A673 (cell line): ENCODE measurements at regions of chr13 and their contacts with region 1.

Region 1: GRCh38 chr13:52652196-52652979 is at the start of gene SUGT1:
- DNase-seq: peak; percentile 99
- H3K4me3 ChIP-seq: peak within 1 kb of the TSS; percentile 84
- H3K27ac ChIP-seq: peak within 1 kb of the TSS; percentile 97
- H3K4me1 ChIP-seq: peaks cover 7% of the 10 kb centered on the region
- H3K27me3 ChIP-seq: no peaks in the 10 kb centered on the region
- CTCF ChIP-seq: peak; percentile 77
- total RNA-seq, gene SUGT1: 104 and 132 TPM in 2 replicates

Region 2: DNA sequence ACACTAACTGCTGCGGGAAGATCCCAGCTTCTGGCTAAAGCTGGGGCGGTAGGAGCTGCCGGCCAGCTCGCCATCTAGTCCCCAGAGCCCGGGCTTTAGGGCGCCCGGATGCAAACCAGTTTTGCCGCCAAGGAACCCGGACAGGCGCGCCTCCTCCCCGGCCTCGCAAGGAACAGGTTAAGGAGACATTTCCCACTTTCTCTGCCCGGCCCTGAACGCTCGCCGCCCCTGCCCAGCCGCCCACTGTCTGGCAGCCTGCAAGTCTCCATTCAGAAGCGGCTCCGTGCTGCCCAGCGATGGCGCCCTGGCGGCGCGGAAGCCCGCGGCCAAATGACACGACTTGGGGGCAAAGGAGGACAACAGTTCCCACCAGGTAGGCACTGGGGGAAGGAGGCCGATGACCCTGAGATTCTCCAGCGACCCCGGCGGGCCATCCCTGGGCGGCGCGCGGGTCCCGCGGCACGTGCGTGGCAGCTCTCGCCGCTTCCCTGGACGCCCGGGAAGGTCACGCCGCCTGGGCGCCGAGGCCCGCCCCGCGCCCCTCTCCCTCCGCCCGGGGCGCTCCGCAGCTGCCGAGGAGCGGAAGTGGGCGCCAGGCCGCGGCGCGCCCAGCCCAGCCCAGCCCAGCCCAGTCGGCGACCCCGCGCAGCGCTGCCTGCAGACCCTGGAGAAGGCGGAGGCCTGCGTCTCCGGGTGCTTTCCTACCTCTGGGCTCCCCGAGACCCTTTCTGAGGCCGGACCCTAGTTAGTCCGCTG is 52.4 kb before region 1 on chr13:
- CTCF ChIA-PET with region 1: no interaction called
- POLR2A ChIA-PET with region 1: no interaction called
- intact Hi-C with region 1: no loop called
- DNase-seq: peak; percentile 14
- H3K4me3 ChIP-seq: peak overlapping the region; percentile 43
- H3K27ac ChIP-seq: peak overlapping the region; percentile 13
- H3K4me1 ChIP-seq: no peaks in the 10 kb centered on the region
- H3K27me3 ChIP-seq: no peaks in the 10 kb centered on the region
- CTCF ChIP-seq: no peak

Region 3: GRCh38 chr13:52617070-52618060 is 35.0 kb before region 1 on chr13:
- CTCF ChIA-PET with region 1: no interaction called
- POLR2A ChIA-PET with region 1: no interaction called
- intact Hi-C with region 1: loop called (anchors 1 kb)
- DNase-seq: peak; percentile 94
- H3K4me3 ChIP-seq: peak overlapping the region; percentile 78
- H3K27ac ChIP-seq: peak overlapping the region; percentile 72
- H3K4me1 ChIP-seq: no peaks in the 10 kb centered on the region
- H3K27me3 ChIP-seq: no peaks in the 10 kb centered on the region
- CTCF ChIP-seq: no peak

Region 4: DNA sequence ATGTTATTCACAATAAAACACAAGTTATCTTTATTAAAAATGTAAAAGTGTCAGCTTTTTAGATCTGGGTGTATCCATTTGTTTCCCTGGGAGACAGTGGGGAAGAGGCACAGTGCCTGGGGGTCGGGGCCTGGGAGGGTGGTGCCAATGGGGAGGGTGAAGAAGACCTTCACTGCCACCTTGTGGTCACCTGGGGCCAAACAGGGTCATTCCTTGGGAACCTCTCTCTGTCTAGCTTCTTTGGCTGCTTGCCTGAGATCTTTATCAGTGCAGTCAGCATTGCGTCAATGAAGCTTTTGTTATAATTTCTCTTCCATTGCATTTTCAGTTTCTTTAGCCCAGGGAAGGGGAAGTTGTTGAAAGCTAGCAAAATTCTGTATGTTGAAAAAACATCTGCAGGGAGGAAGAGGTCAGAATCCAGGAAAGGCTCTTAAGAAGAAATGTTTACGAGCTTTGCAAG is 157.0 kb after region 1 on chr13:
- CTCF ChIA-PET with region 1: interaction called, 3 read pairs
- POLR2A ChIA-PET with region 1: no interaction called
- intact Hi-C with region 1: loop called (anchors 10 kb)
- DNase-seq: peak; percentile 92
- H3K4me3 ChIP-seq: no peak overlapping the region
- H3K27ac ChIP-seq: no peak overlapping the region
- H3K4me1 ChIP-seq: peaks cover 19% of the 10 kb centered on the region
- H3K27me3 ChIP-seq: no peaks in the 10 kb centered on the region
- CTCF ChIP-seq: peak; percentile 79

Region 5: GRCh38 chr13:52846567-52847321 is 194.4 kb after region 1 on chr13:
- CTCF ChIA-PET with region 1: no interaction called
- POLR2A ChIA-PET with region 1: no interaction called
- intact Hi-C with region 1: loop called (anchors 5 kb)
- DNase-seq: peak; percentile 74
- H3K4me3 ChIP-seq: peak overlapping the region; percentile 28
- H3K27ac ChIP-seq: no peak overlapping the region
- H3K4me1 ChIP-seq: peaks cover 38% of the 10 kb centered on the region
- H3K27me3 ChIP-seq: peaks cover 71% of the 10 kb centered on the region
- CTCF ChIP-seq: peak; percentile 66